ENCODE measurements at regions of chr6 and their contacts with region 1.

Region 1: DNA sequence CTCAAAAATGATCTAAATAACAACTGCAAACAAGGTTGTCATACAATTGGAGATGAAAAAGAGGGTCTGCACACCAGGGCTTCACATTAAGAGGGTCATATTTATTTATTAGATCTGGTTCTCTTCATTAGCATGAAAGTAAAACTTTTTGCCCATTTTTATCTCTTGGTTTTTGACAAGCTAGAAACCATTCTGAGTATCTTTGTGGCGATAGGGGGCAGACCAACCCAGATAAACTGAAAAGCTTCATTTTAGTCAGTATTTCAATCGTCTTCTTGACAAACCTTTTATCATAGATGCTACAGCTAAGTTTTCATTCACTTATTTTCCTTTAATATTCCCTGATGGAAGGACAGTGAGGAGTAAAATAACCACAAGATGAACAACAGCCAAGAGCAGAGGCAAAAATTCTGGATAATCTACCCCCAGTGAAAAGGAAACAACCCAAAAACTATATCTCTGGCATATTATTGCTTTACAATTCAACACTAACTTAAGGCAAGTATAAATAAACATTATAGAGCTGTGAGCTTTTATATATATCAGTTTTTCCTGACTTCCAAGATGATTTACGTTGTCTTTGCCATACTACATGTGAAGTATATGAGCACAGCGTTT is 45.2 kb downstream of the THEMIS start:
- DNase-seq: no peak
- CTCF ChIP-seq: peak; percentile 47

Region 2: GRCh38 chr6:128327890-128328289 is 472.2 kb after region 1 on chr6:
- CTCF ChIA-PET with region 1: interaction called, 16 read pairs
- POLR2A ChIA-PET with region 1: no interaction called
- DNase-seq: peak; percentile 5
- CTCF ChIP-seq: peak; percentile 62